Activated T-helper 1 cell treated with anti-CD3 and anti-CD28 coated beads, Interleukin-12 subunit alpha, Interleukin-12 subunit beta, Interleukin-2, Interleukin-4 antibody, amounts not matched to agents 30 ng/mL and 10 ng/mL and 1 ng/mL, durations not matched to agents 14 hours and 24 hours and 36 hours (primary cell): ENCODE measurements at regions of chr11 and their contacts with region 1.

Region 1: GRCh38 chr11:75907906-75908527 is 93.0 kb downstream of the UVRAG start:
- DNase-seq: no peak
- H3K4me3 Mint-ChIP-seq: no peak overlapping the region
- H3K27ac Mint-ChIP-seq: no peak overlapping the region
- H3K4me1 Mint-ChIP-seq: peaks cover 31% of the 10 kb centered on the region
- H3K27me3 Mint-ChIP-seq: peaks cover 16% of the 10 kb centered on the region

Region 2: GRCh38 chr11:75733431-75734107 is 174.4 kb before region 1 on chr11:
- intact Hi-C with region 1: no loop called
- DNase-seq: no peak
- H3K4me3 Mint-ChIP-seq: no peak overlapping the region
- H3K27ac Mint-ChIP-seq: no peak overlapping the region
- H3K4me1 Mint-ChIP-seq: peaks cover 4% of the 10 kb centered on the region
- H3K27me3 Mint-ChIP-seq: peaks cover 13% of the 10 kb centered on the region

Region 3: DNA sequence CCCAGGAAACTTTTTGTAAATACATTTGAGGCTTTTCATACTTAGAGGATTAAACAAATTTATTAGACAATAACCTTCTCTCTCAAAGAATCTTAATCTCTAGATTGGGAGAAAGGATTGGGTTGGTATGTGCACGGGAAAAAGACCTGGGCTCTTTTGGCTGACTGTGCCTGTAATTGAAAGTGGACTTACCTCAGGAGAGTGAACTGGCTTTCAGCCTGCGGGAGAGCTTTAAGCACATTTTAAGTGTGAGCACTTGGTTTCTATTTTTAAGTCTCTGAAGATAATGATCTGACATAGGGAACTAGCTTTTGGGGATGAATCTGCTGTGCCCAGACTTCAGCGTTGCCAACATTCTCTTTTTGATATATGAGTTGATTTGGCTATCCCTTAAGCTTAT is 57.2 kb before region 1 on chr11:
- intact Hi-C with region 1: no loop called
- DNase-seq: no peak
- H3K4me3 Mint-ChIP-seq: no peak overlapping the region
- H3K27ac Mint-ChIP-seq: no peak overlapping the region
- H3K4me1 Mint-ChIP-seq: peaks cover 14% of the 10 kb centered on the region
- H3K27me3 Mint-ChIP-seq: no peaks in the 10 kb centered on the region

Region 4: GRCh38 chr11:75896843-75897419 is 11.1 kb before region 1 on chr11:
- intact Hi-C with region 1: loop called (anchors 1 kb)
- DNase-seq: no peak
- H3K4me3 Mint-ChIP-seq: no peak overlapping the region
- H3K27ac Mint-ChIP-seq: no peak overlapping the region
- H3K4me1 Mint-ChIP-seq: peaks cover 3% of the 10 kb centered on the region
- H3K27me3 Mint-ChIP-seq: no peaks in the 10 kb centered on the region

Region 5: DNA sequence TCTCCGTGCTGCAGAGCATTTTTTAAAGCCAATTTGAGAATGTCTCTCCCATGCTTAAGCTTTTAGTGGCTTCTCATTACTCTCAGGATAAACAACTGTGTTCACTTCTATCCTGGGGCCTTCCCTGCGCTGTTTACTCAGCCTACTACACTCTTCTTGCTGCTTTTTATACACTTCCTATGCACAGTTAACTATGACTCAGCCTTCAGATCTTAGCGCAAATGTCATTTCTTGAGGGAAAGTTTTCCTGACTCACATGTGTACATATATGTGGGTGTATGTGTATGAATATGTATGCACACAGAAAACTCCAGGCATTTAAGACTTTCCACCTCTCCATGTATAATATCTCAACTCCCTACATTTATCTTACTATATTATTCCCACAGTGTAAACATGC is 463.2 kb after region 1 on chr11:
- intact Hi-C with region 1: loop called (anchors 2 kb)
- DNase-seq: no peak
- H3K4me3 Mint-ChIP-seq: peak overlapping the region; percentile 52
- H3K27ac Mint-ChIP-seq: peak overlapping the region; percentile 86
- H3K4me1 Mint-ChIP-seq: peaks cover 33% of the 10 kb centered on the region
- H3K27me3 Mint-ChIP-seq: no peaks in the 10 kb centered on the region